Naive thymus-derived CD4-positive, alpha-beta T cell (primary cell): ENCODE measurements at regions of chr7 and their contacts with region 1.

Region 1: GRCh38 chr7:100611974-100612729 is at the start of gene MOSPD3:
- DNase-seq: peak; percentile 97 to 99 (median 98)
- ATAC-seq: peak; percentile 94
- H3K4me3 ChIP-seq: peak within 1 kb of the TSS; percentile 99
- H3K4me3 Mint-ChIP-seq: peak within 1 kb of the TSS; percentile 92 to 99 (median 98)
- H3K27ac ChIP-seq: peak within 1 kb of the TSS; percentile 92
- H3K27ac Mint-ChIP-seq: peak within 1 kb of the TSS; percentile 97 to 100 (median 100)
- H3K4me1 ChIP-seq: peaks cover 10 to 16% of the 10 kb centered on the region in 2 donors
- H3K4me1 Mint-ChIP-seq: peaks cover 18 to 29% (median 24%) of the 10 kb centered on the region in 7 donors
- H3K27me3 ChIP-seq: no peaks in the 10 kb centered on the region
- H3K27me3 Mint-ChIP-seq: peaks cover 0 to 8% (median 0%) of the 10 kb centered on the region in 5 donors
- total RNA-seq, gene MOSPD3: 8.8 to 54.9 (median 13.1) TPM

Region 2: DNA sequence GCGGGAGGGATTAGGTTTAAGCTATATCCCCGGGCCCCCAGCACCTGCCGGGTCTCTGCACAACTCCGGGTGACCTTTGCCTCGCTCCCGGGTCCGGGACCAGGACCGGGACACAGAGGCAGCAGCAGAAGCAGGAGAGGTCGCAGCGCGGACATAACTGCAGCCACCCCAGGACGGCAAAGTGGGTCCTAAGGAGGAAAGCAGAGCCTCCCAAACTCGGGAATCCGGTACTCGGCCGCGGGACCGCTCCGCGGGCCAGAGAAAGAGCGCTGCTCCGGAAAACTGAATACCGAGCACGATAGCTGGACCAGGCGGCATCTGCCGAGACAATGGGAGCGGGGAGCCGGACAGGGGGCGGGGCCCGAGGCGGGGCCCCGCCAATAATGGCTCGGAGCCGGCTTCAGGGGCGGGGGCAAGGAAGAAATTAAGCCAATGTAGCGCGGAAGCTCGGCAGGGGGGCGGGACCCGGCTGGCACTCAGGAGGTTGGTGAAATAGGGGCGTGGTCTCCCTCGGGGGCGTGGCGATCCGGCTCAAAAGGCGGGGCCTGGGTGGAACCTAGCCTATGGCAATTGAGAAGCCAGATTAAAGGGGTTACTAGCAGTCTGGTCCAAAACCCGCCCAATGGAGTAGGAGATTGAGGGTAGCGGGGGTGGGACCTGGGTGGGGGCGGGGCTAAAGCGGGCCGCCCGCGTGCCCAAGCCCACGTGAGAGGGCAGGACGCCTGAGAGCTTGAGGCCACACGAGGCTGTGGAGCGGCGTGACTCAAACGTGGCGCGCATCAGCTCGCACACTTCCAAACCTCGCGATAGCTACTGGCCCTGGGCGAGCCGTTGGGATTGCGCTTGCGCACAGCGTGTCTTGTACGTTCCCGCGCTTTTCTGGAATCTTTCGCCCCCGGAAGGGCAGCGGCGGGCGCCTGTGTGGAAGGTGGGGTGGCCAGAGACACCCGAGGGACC is 434.8 kb before region 1 on chr7 and contains the starts of genes GPC2 and STAG3:
- CTCF ChIA-PET with region 1: no interaction called
- POLR2A ChIA-PET with region 1: no interaction called
- intact Hi-C with region 1: loop called in 1 of 2 experiments (anchors 2 kb)
- DNase-seq: peak; percentile 95 to 99 (median 98)
- ATAC-seq: peak; percentile 97
- H3K4me3 ChIP-seq: peak within 1 kb of the TSS; percentile 70
- H3K4me3 Mint-ChIP-seq: peak within 1 kb of the TSS; percentile 76 to 84 (median 80)
- H3K27ac ChIP-seq: peak within 1 kb of the TSS; percentile 76
- H3K27ac Mint-ChIP-seq: peak within 1 kb of the TSS; percentile 42 to 92 (median 78)
- H3K4me1 ChIP-seq: peaks cover 7 to 28% of the 10 kb centered on the region in 2 donors
- H3K4me1 Mint-ChIP-seq: peaks cover 28 to 67% (median 52%) of the 10 kb centered on the region in 7 donors
- H3K27me3 ChIP-seq: no peaks in the 10 kb centered on the region
- H3K27me3 Mint-ChIP-seq: peaks cover 0 to 4% (median 0%) of the 10 kb centered on the region in 5 donors
- total RNA-seq, gene GPC2: 8.1 to 30.6 (median 18.2) TPM
- total RNA-seq, gene STAG3: 5.5 to 24.6 (median 9.5) TPM

Region 3: GRCh38 chr7:100568896-100569844 is 43.0 kb before region 1 on chr7:
- CTCF ChIA-PET with region 1: interaction called, 3 read pairs
- POLR2A ChIA-PET with region 1: interaction called, 3 read pairs
- intact Hi-C with region 1: loop called in 1 of 2 experiments (anchors 1 kb)
- DNase-seq: peak in 5 of 9 donors; percentile 31 to 47 (median 38)
- ATAC-seq: peak; percentile 45
- H3K4me3 ChIP-seq: peak overlapping the region; percentile 51
- H3K4me3 Mint-ChIP-seq: peak overlapping the region; percentile 3 to 78 (median 70)
- H3K27ac ChIP-seq: peak overlapping the region; percentile 59
- H3K27ac Mint-ChIP-seq: peak overlapping the region; percentile 62 to 92 (median 83)
- H3K4me1 ChIP-seq: peaks cover 25 to 32% of the 10 kb centered on the region in 2 donors
- H3K4me1 Mint-ChIP-seq: peaks cover 12 to 49% (median 30%) of the 10 kb centered on the region in 7 donors
- H3K27me3 ChIP-seq: no peaks in the 10 kb centered on the region
- H3K27me3 Mint-ChIP-seq: peaks cover 0 to 4% (median 0%) of the 10 kb centered on the region in 5 donors

Region 4: DNA sequence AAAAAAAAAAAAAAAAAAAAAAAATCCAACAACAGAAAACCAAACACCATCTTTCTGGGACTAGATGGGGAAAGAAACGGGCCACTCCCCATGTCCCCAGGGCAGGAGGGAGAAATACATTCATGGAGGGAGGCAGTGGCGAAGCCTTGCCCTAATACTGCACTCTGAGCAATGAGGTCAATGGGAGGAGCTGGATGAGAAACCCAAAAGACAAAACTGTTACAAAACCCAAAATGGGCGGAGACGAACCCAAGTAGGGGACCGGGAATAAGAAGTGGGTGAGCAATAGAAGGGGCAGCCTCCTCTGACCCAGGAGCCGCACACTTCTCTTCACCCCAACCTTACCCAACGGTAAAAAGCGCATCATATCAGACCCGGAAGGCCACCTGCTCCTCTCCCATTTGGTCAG is 68.0 kb after region 1 on chr7:
- CTCF ChIA-PET with region 1: interaction called, 3 read pairs
- POLR2A ChIA-PET with region 1: interaction called, 24 read pairs
- intact Hi-C with region 1: no loop called
- DNase-seq: no peak
- ATAC-seq: no peak
- H3K4me3 ChIP-seq: no peak overlapping the region
- H3K4me3 Mint-ChIP-seq: peak overlapping the region in 8 of 10 donors; percentile 12 to 75 (median 38)
- H3K27ac ChIP-seq: peak overlapping the region; percentile 53
- H3K27ac Mint-ChIP-seq: peak overlapping the region in 8 of 9 donors; percentile 33 to 90 (median 81)
- H3K4me1 ChIP-seq: peaks cover 0 to 22% of the 10 kb centered on the region in 2 donors
- H3K4me1 Mint-ChIP-seq: peaks cover 21 to 50% (median 30%) of the 10 kb centered on the region in 7 donors
- H3K27me3 ChIP-seq: no peaks in the 10 kb centered on the region
- H3K27me3 Mint-ChIP-seq: no peaks in the 10 kb centered on the region

Region 5: DNA sequence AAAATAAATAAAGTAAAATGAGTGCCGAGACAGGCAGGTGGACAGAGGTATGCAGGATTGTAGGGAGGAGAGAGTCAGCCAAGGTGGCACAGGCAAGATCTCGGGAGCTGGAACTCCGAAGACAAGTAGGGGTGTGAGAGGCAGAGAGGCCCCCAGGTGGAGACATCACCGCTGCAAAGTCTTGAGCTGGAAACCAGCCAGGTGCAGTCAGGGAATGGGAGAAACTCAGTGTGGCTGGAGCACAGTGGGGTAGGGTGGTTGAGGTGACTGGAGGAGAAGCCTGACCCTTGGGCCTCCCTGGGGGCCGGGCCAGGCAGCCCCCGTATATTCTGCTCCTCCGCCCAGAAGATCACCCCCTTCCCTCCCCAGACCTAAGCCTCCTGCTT is 211.0 kb after region 1 on chr7:
- CTCF ChIA-PET with region 1: no interaction called
- POLR2A ChIA-PET with region 1: no interaction called
- intact Hi-C with region 1: no loop called
- DNase-seq: no peak
- ATAC-seq: no peak
- H3K4me3 ChIP-seq: no peak overlapping the region
- H3K4me3 Mint-ChIP-seq: no peak overlapping the region
- H3K27ac ChIP-seq: no peak overlapping the region
- H3K27ac Mint-ChIP-seq: peak overlapping the region in 1 of 9 donors; percentile 78
- H3K4me1 ChIP-seq: peaks cover 0 to 6% of the 10 kb centered on the region in 2 donors
- H3K4me1 Mint-ChIP-seq: peaks cover 15 to 20% (median 16%) of the 10 kb centered on the region in 7 donors
- H3K27me3 ChIP-seq: peaks cover 0 to 8% of the 10 kb centered on the region in 2 donors
- H3K27me3 Mint-ChIP-seq: peaks cover 21 to 33% (median 26%) of the 10 kb centered on the region in 5 donors